ENCODE measurements at regions of chr14 and their contacts with region 1.

Region 1: GRCh38 chr14:35404449-35405303 is at the start of gene NFKBIA:
- DNase-seq: peak; percentile 90
- ATAC-seq: peak; percentile 72
- H3K4me3 Mint-ChIP-seq: peak within 1 kb of the TSS; percentile 93
- H3K27ac Mint-ChIP-seq: peak within 1 kb of the TSS; percentile 97
- H3K4me1 Mint-ChIP-seq: peaks cover 52% of the 10 kb centered on the region
- H3K27me3 Mint-ChIP-seq: no peaks in the 10 kb centered on the region
- total RNA-seq, gene NFKBIA: 56.1 to 56.8 TPM

Region 2: DNA sequence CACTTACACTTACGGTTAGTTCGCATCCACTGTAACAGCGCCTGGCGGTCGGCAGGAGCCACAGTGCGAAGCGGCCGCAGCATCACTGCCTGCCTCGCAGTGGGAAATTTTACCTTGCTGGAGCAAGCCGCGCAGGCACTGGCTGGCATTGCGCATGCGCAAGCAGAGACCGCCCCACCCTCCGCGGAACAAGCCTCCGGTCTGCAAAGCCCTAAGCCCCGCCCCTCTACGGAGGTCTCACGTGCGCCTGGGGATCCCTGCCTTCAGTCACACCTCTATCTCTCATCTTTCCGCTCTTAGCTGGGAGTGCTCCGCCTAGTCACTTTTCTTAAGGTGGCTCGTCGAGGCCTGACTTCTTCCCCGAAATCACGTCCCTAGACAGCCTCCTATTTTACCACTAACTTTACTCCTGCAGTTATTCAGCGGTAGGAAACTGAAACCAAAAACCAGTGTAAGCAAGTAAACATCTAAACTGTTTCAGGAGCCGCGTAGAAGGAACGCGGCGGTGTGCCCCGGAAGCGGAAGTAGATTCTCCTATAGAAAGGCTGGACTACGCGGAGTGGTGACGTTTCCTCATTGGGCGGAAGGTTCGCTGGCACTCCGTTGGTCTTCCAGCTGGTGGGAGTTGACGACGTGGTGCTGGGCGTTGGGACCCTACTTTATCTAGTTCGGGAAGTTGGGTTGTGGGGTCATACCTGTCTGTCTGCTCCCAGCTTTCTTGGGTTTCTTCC is 422.1 kb before region 1 on chr14 and contains the start of gene SRP54:
- CTCF ChIA-PET with region 1: no interaction called
- POLR2A ChIA-PET with region 1: interaction called, 21 read pairs
- DNase-seq: peak; percentile 100
- ATAC-seq: peak; percentile 93
- H3K4me3 Mint-ChIP-seq: no peak within 1 kb of the TSS
- H3K27ac Mint-ChIP-seq: no peak within 1 kb of the TSS
- H3K4me1 Mint-ChIP-seq: peaks cover 18% of the 10 kb centered on the region
- H3K27me3 Mint-ChIP-seq: no peaks in the 10 kb centered on the region
- total RNA-seq, gene SRP54: 58.6 to 61.6 TPM

Region 3: DNA sequence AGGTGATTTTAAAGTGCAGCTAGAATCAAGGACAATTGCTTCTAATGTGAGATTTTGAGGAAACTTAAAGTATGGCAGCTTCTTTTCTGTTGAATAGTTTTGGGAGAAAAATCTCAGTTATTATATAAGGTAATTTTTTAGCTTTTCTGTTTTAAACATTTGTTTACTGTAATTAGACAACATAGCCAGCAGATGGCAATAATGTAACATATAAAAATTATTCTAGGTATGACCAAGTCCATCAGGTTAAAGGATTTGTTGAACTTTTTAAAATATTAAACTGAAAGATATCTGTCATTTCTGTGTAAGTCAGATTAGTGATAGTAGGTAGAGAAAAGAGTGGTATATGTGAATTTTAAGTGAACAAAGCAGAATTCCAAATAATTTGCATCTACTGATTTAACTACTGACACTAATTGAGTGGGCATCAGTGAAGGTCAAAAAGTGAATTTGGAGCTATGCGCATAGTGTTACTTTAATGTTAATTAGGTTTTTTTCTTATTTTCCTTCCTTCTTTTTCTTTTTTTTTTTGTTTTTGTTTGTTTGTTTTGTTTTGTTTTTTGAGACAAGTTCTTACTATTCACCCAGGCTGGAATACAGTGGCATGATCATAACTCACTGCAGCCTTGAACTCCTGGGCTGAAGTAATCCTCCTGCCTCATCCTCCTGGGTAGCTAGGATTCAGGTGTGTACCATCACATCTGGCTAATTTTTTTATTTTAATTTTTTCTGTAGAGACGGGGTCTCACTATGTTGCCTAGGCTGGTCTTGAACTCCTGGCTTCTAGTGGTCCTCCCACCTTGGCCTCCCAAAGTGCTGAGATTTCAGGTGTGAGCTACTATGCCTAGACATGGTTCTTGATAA is 263.7 kb before region 1 on chr14:
- CTCF ChIA-PET with region 1: interaction called, 67 read pairs
- POLR2A ChIA-PET with region 1: interaction called, 14 read pairs
- DNase-seq: no peak
- ATAC-seq: no peak
- H3K4me3 Mint-ChIP-seq: no peak overlapping the region
- H3K27ac Mint-ChIP-seq: no peak overlapping the region
- H3K4me1 Mint-ChIP-seq: peaks cover 4% of the 10 kb centered on the region
- H3K27me3 Mint-ChIP-seq: no peaks in the 10 kb centered on the region

Region 4: DNA sequence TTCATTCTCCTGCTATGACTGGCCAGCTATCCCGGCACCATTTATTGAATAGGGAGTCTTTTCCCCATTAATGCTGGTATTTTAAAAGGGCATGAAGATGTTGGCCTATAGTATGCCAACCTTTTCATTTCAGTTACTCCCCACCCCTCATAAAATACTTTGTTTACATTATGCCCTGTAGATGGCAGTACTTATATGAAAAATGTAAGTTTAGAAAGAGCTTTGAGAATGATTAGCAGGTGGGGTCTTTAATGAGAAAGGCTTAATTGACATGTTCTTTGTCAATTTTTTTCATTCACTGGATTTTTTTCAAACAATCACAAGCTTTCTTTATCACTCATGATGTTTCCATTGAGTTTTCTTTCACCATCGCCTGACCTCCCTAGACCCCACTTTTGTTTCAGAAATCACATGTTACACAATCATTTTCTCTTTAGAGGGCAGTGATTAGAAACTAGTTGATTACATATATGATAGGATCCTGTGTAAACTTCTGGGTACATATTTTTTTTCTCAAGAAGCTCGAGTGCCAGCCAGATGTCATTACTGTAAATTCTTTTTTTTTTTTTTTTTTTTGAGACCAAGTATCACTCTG is 175.1 kb before region 1 on chr14:
- CTCF ChIA-PET with region 1: interaction called, 132 read pairs
- POLR2A ChIA-PET with region 1: interaction called, 37 read pairs
- DNase-seq: no peak
- ATAC-seq: no peak
- H3K4me3 Mint-ChIP-seq: no peak overlapping the region
- H3K27ac Mint-ChIP-seq: no peak overlapping the region
- H3K4me1 Mint-ChIP-seq: peaks cover 21% of the 10 kb centered on the region
- H3K27me3 Mint-ChIP-seq: no peaks in the 10 kb centered on the region

Region 5: DNA sequence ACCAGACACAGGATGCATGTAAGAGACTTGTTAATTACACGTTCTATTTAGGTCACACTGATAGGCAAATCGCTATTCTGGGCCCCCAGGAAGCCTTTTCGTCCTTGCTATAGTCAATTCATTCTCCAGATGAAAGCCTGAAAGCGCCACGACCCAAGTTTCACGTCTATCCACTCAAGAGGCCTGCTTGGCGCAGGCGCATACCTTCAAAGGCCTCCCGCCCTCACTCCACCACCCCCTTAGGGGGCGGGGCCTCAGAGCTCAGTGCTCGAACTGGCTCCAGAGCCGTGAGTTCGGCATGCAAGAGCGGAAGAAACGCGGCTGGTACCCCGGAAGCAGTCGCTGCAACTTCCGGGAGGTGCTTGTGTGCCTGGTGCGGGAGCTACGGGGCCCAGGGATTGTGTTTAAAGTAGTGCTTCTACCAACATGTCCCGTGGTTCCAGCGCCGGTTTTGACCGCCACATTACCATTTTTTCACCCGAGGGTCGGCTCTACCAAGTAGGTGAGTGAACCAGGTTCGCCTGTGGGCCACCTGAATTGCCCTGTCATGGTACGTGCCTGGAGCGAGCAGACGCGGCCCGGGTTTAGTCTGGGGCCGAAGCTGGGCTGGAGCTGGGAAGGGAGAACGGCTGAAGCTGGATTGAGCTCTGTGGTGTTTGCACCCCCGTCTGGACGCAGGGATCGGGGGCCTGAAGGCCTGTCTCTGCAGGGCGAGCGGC is 112.5 kb before region 1 on chr14 and contains the start of gene PSMA6:
- CTCF ChIA-PET with region 1: interaction called, 15 read pairs
- POLR2A ChIA-PET with region 1: interaction called, 102 read pairs
- DNase-seq: peak; percentile 100
- ATAC-seq: peak; percentile 94
- H3K4me3 Mint-ChIP-seq: peak within 1 kb of the TSS; percentile 99
- H3K27ac Mint-ChIP-seq: peak within 1 kb of the TSS; percentile 98
- H3K4me1 Mint-ChIP-seq: peaks cover 41% of the 10 kb centered on the region
- H3K27me3 Mint-ChIP-seq: no peaks in the 10 kb centered on the region
- total RNA-seq, gene PSMA6: 266 to 269 TPM

Region 6: GRCh38 chr14:35339761-35340406 is 64.8 kb before region 1 on chr14:
- CTCF ChIA-PET with region 1: interaction called, 27 read pairs
- POLR2A ChIA-PET with region 1: interaction called, 32 read pairs
- DNase-seq: peak; percentile 49
- ATAC-seq: peak; percentile 54
- H3K4me3 Mint-ChIP-seq: peak overlapping the region; percentile 18
- H3K27ac Mint-ChIP-seq: peak overlapping the region; percentile 87
- H3K4me1 Mint-ChIP-seq: peaks cover 46% of the 10 kb centered on the region
- H3K27me3 Mint-ChIP-seq: no peaks in the 10 kb centered on the region

Region 7: DNA sequence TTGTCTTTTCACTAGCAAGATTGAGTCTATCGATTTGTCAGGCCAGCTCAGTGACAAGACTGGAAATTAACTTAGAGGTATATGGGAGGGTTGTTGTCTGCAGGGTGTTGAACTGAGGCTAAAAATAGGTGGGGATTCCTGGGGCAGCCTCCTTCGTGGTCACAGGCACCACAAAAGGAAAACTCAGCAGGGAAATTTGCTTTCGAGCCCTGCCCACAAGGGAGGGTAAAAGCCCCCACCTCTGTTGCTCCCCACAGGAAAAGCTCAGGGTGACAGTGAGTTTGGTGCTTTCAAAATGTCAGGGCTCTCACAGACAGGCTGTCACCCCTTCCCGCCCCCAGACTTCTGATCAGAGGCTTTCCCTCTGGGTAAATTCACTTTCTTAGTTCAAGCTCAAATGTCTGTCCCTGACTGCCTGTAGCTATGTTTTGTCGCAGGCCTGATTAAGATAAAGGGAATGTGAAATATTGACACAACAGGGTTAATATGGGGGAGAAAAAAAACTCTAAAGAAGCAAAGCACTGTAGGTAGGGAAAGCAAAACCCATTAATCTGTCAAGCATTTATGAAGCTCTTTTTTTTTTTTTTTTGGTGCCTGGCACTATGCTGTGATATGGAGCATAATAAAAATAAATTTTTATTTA is 11.6 kb after region 1 on chr14:
- CTCF ChIA-PET with region 1: interaction called, 112 read pairs
- POLR2A ChIA-PET with region 1: interaction called, 113 read pairs
- DNase-seq: peak; percentile 62
- ATAC-seq: peak; percentile 50
- H3K4me3 Mint-ChIP-seq: peak overlapping the region; percentile 29
- H3K27ac Mint-ChIP-seq: peak overlapping the region; percentile 79
- H3K4me1 Mint-ChIP-seq: peaks cover 51% of the 10 kb centered on the region
- H3K27me3 Mint-ChIP-seq: no peaks in the 10 kb centered on the region